Caco-2 (cell line): ENCODE measurements at regions of chr19 and their contacts with region 1.

Region 1: DNA sequence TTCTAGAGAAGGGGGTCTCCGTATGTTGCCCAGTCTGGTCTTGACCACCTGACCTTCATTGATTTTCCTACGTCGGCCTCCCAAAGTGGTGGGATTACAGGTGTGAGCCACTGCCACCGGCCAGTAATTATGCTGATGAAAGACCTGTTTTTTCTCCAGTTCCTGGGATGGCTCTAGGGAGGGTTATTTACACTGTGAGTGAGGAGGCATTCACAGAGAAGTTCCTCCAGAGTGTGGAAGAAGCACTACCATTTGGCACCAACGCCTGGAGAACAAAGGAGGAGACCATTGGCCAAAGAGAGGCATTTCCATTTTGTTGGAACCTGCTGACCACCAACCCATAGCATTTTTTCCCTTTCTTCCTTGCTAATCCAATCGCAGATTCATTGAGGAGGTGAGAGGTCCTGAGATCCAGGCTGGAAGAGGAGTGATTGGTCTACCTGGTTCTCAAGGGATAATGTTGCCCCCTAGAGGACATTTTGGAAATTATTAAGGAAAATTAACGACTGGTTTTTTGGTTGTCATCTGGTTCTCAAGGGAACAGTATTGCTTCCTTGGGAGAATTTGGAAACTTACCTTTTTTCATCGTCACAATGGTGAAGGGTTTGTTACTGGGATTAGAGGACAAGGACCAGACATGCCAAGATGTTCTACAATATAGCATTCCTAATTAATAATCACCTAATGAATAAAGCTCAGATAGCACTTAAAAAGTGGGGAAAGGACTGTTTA is 5.5 kb upstream of the SAE1 start:
- DNase-seq: peak; percentile 66 to 74
- H3K4me3 ChIP-seq: no peak overlapping the region
- H3K4me3 Mint-ChIP-seq: peak overlapping the region; percentile 59
- H3K27ac Mint-ChIP-seq: peak overlapping the region; percentile 88
- H3K4me1 ChIP-seq: peaks cover 27% of the 10 kb centered on the region
- H3K4me1 Mint-ChIP-seq: peaks cover 19% of the 10 kb centered on the region
- H3K27me3 ChIP-seq: no peaks in the 10 kb centered on the region
- H3K27me3 Mint-ChIP-seq: no peaks in the 10 kb centered on the region
- CTCF ChIP-seq: peak; percentile 53 to 80

Region 2: GRCh38 chr19:46728693-46729676 is 396.1 kb before region 1 on chr19:
- CTCF ChIA-PET with region 1: no interaction called
- POLR2A ChIA-PET with region 1: no interaction called
- intact Hi-C with region 1: no loop called
- DNase-seq: peak; percentile 51 to 80
- H3K4me3 ChIP-seq: no peak overlapping the region
- H3K4me3 Mint-ChIP-seq: no peak overlapping the region
- H3K27ac Mint-ChIP-seq: no peak overlapping the region
- H3K4me1 ChIP-seq: no peaks in the 10 kb centered on the region
- H3K4me1 Mint-ChIP-seq: peaks cover 13% of the 10 kb centered on the region
- H3K27me3 ChIP-seq: no peaks in the 10 kb centered on the region
- H3K27me3 Mint-ChIP-seq: no peaks in the 10 kb centered on the region
- CTCF ChIP-seq: peak; percentile 87 to 92

Region 3: GRCh38 chr19:46850228-46851203 is 274.6 kb before region 1 on chr19 and contains the start of gene AP2S1:
- CTCF ChIA-PET with region 1: no interaction called
- POLR2A ChIA-PET with region 1: no interaction called
- intact Hi-C with region 1: loop called (anchors 10 kb)
- DNase-seq: peak; percentile 98 to 99
- H3K4me3 ChIP-seq: peak within 1 kb of the TSS; percentile 69
- H3K4me3 Mint-ChIP-seq: peak within 1 kb of the TSS; percentile 96
- H3K27ac Mint-ChIP-seq: peak within 1 kb of the TSS; percentile 94
- H3K4me1 ChIP-seq: peaks cover 8% of the 10 kb centered on the region; the same call in 1 of the 2 replicates
- H3K4me1 Mint-ChIP-seq: peaks cover 28% of the 10 kb centered on the region
- H3K27me3 ChIP-seq: no peaks in the 10 kb centered on the region
- H3K27me3 Mint-ChIP-seq: no peaks in the 10 kb centered on the region
- CTCF ChIP-seq: no peak
- total RNA-seq, gene AP2S1: 211 and 234 TPM in 2 replicates

Region 4: DNA sequence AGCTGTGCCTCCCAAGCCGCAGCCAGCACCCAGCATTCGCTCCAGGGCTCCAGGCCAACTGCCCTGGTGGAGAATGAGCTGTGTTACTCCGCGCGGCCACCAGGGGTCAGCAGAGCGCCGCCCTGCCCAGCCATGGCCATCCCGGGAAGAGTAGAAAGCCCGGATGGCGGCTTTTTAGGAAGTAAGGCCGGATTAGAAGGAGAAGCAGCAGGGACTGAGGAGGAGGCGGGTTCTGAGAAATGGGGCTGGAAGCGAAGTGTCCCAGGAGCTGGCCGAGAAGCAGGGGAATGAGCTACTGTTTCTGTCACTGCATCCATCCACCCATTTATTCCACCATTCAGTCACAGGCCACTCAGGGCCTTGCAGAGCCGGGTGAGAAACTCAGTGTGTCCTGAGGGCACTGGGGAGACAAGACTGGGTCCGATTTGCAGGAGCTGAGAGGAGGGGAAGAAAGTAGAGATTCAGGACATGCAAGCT is 112.0 kb before region 1 on chr19:
- CTCF ChIA-PET with region 1: interaction called, 11 read pairs
- POLR2A ChIA-PET with region 1: interaction called, 3 read pairs
- intact Hi-C with region 1: loop called (anchors 1 kb)
- DNase-seq: peak; percentile 82 to 92
- H3K4me3 ChIP-seq: 0 out of 2 replicates have a peak overlapping the region, but pooled peaks have one; percentile 7
- H3K4me3 Mint-ChIP-seq: peak overlapping the region; percentile 9
- H3K27ac Mint-ChIP-seq: peak overlapping the region; percentile 10
- H3K4me1 ChIP-seq: no peaks in the 10 kb centered on the region
- H3K4me1 Mint-ChIP-seq: peaks cover 11% of the 10 kb centered on the region
- H3K27me3 ChIP-seq: no peaks in the 10 kb centered on the region
- H3K27me3 Mint-ChIP-seq: peaks cover 3% of the 10 kb centered on the region
- CTCF ChIP-seq: peak; percentile 99

Region 5: DNA sequence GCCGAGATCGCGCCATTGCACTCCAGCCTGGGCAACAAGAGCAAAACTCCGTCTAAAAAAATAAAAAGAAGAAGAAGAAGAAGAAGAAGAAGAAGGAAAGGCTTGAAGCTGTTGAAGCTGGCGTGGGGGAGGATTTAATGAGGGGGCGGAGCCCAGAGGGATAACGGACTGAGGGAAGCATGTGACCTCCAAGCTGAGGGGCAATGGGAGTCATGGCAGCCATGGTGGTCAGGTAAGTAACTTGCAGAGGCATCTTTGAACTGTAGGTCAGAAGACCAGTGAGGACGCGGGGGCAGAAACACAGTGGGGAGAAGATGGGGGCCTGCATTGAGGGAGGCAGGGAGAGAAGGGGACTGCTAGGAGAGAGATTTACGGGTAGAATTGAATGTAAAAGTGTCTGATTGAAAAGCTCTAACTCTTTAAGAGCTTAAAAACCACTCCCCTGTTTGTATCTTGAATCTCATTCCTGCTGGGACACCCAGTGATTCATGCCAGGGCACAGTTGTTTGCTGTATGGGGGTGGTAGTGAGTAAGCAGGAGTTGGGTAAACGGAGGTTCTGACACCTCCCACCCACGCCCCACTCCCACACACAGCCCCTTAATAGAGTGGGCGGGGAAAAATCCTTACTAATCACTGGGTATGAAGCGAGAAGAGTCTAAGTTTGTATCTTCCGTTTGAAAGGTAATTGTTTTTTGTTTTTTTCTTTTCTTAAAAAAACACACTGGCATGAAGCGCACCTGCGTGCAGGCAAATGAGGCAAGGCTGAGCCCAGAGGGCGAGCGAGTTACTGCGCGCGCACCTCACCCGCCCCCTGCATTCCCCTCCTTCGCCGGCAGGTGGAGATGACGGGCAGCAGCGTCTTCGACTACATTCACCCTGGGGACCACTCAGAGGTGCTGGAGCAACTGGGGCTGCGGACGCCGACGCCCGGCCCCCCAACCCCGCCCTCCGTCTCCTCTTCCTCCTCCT is 89.7 kb before region 1 on chr19:
- CTCF ChIA-PET with region 1: interaction called, 4 read pairs
- POLR2A ChIA-PET with region 1: interaction called, 3 read pairs
- intact Hi-C with region 1: loop called (anchors 1 kb)
- DNase-seq: peak; percentile 89 to 98
- H3K4me3 ChIP-seq: peak overlapping the region; percentile 44
- H3K4me3 Mint-ChIP-seq: peak overlapping the region; percentile 79
- H3K27ac Mint-ChIP-seq: peak overlapping the region; percentile 50
- H3K4me1 ChIP-seq: peaks cover 5% of the 10 kb centered on the region; the same call in 1 of the 2 replicates
- H3K4me1 Mint-ChIP-seq: peaks cover 18% of the 10 kb centered on the region
- H3K27me3 ChIP-seq: no peaks in the 10 kb centered on the region
- H3K27me3 Mint-ChIP-seq: peaks cover 3% of the 10 kb centered on the region
- CTCF ChIP-seq: peak; percentile 94 to 98

Region 6: DNA sequence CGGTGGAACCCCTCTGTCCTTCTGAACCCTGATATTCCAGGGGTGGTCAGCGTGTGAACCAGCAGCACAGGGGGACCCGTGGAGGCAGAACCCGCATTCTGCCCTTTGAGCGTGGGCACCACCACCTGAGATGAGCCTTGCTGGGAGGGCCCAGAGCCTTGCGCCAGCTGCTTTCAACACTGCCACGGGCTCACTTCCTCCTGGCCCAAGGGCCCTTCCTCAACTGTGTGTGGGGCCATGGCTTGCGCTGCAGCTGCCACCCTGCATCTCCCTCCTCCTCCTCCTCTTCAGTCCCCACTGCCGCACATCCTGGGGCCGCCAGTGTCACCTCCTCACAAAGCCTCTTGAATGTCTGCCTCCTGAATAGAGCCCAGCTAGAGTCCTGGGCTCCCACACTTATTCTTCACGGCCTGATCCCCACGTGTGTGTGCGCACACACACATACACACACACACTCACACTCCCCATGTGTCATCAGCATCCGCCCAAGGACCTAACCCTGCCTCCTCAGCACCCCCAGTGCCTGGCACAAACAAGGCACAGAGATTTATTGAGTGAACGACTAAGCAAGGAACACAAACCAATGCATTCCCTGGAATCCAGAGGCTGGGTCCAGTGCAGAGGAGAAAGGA is 49.8 kb before region 1 on chr19:
- CTCF ChIA-PET with region 1: interaction called, 16 read pairs
- POLR2A ChIA-PET with region 1: no interaction called
- intact Hi-C with region 1: loop called (anchors 1 kb)
- DNase-seq: no peak
- H3K4me3 ChIP-seq: no peak overlapping the region
- H3K4me3 Mint-ChIP-seq: no peak overlapping the region
- H3K27ac Mint-ChIP-seq: no peak overlapping the region
- H3K4me1 ChIP-seq: peaks cover 10% of the 10 kb centered on the region
- H3K4me1 Mint-ChIP-seq: peaks cover 3% of the 10 kb centered on the region
- H3K27me3 ChIP-seq: no peaks in the 10 kb centered on the region
- H3K27me3 Mint-ChIP-seq: no peaks in the 10 kb centered on the region
- CTCF ChIP-seq: no peak

Region 7: GRCh38 chr19:47094557-47095475 is 30.3 kb before region 1 on chr19:
- CTCF ChIA-PET with region 1: interaction called, 4 read pairs
- POLR2A ChIA-PET with region 1: no interaction called
- intact Hi-C with region 1: loop called (anchors 1 kb)
- DNase-seq: peak; percentile 75 to 88
- H3K4me3 ChIP-seq: no peak overlapping the region
- H3K4me3 Mint-ChIP-seq: peak overlapping the region; percentile 41
- H3K27ac Mint-ChIP-seq: peak overlapping the region; percentile 100
- H3K4me1 ChIP-seq: peaks cover 64% of the 10 kb centered on the region
- H3K4me1 Mint-ChIP-seq: peaks cover 50% of the 10 kb centered on the region
- H3K27me3 ChIP-seq: no peaks in the 10 kb centered on the region
- H3K27me3 Mint-ChIP-seq: no peaks in the 10 kb centered on the region
- CTCF ChIP-seq: no peak